Heart right ventricle (tissue), 16 donors: ENCODE measurements at regions of chr17 and their contacts with region 1.

Region 1: GRCh38 chr17:1516388-1517161 is at the start of gene INPP5K:
- DNase-seq: peak; percentile 98
- ATAC-seq: peak; percentile 96 to 99 (median 97)
- H3K4me3 ChIP-seq: peak within 1 kb of the TSS; percentile 81 to 100 (median 94)
- H3K27ac ChIP-seq: peak within 1 kb of the TSS; percentile 86 to 97 (median 92)
- H3K4me1 ChIP-seq: peaks cover 18 to 59% (median 50%) of the 10 kb centered on the region in 9 donors
- H3K27me3 ChIP-seq: no peaks in the 10 kb centered on the region
- CTCF ChIP-seq: peak in 1 of 9 donors; percentile 14
- total RNA-seq, gene INPP5K: 26.8 to 41.2 (median 32.7) TPM

Region 2: DNA sequence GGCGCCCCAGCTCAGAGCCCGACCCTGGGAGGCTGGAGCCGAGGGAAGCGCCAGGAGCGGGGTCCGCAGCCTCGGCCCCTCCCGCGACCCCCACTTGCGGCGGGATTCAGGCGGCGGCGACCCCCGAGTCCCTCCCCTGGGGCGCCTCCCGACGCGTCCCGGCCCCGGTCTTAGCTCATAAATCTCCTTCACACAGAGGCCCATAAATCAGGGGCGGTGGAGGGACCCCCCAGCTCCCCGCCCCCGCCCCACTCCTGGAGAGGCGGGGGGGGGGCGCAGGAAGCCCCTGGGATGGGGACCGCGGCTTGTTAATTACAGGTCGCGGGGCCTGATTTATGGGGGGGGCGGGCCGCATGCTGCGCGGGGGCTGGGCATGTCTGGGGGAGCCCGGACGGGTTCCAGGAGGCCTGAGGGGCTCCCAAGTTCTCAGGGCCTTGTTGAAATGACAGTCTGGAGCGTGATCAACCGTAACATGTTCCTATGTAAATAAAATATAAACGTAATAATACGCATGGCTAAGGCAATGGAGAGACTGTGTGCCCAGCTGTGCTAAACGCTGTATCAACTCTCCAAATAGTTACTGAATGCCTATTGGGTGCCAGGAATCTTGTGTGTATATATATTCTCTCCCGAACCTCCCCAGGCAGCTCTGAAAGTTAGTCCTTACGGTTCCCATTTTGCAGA is 256.3 kb before region 1 on chr17:
- intact Hi-C with region 1: loop called in 4 of 10 experiments (anchors 5 to 10 kb)
- DNase-seq: no peak
- ATAC-seq: peak in 3 of 8 donors; percentile 3 to 15 (median 15)
- H3K4me3 ChIP-seq: peak overlapping the region in 9 of 10 donors; percentile 25 to 58 (median 54)
- H3K27ac ChIP-seq: peak overlapping the region in 1 of 10 donors; percentile 66
- H3K4me1 ChIP-seq: peaks cover 0 to 28% (median 22%) of the 10 kb centered on the region in 9 donors
- H3K27me3 ChIP-seq: peaks cover 0 to 45% (median 0%) of the 10 kb centered on the region in 7 donors
- CTCF ChIP-seq: no peak

Region 3: GRCh38 chr17:1275962-1276736 is 240.4 kb before region 1 on chr17:
- intact Hi-C with region 1: loop called in 3 of 10 experiments (anchors 5 to 10 kb)
- DNase-seq: peak; percentile 63 to 76
- ATAC-seq: peak; percentile 43 to 84 (median 70)
- H3K4me3 ChIP-seq: no peak overlapping the region
- H3K27ac ChIP-seq: no peak overlapping the region
- H3K4me1 ChIP-seq: peaks cover 0 to 7% (median 0%) of the 10 kb centered on the region in 9 donors
- H3K27me3 ChIP-seq: peaks cover 0 to 44% (median 38%) of the 10 kb centered on the region in 7 donors
- CTCF ChIP-seq: peak; percentile 67 to 88 (median 82)

Region 4: DNA sequence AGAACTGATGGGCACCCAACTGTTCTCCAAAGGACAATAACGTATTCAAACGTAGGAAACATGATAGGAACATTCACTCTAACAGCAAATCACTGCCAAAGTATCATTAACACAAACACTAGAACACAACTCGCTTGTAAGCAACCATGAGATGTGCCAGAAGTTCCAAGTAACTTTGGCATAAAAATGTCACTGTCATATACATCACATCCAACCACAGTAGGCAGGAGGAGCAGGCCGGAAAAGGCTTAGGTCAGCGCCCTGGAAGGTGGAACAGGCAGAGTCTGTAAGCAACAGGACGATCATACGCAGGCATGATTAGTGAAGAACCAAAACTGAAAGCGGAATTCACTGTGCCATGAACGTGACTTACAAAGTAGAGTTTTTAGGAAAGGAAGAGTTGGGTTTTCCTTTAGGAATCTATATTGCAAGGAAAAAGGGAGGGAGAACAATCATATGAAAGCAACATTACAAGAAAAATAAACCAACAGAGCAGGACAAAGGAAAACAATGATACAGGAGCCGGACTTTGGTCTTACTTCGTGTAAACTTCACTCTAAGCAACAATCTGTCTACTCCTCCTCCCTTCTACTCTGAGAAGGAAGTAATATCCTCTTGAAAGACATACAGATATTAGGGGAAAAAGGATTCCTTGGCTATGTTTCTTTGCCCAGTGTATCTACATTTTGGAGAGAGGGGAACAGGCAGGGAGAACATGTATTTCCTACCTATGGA is 168.8 kb before region 1 on chr17:
- intact Hi-C with region 1: loop called in 2 of 10 experiments (anchors 5 kb)
- DNase-seq: peak in 1 of 2 donors; percentile 44
- ATAC-seq: peak; percentile 53 to 84 (median 74)
- H3K4me3 ChIP-seq: peak overlapping the region in 6 of 10 donors; percentile 10 to 30 (median 26)
- H3K27ac ChIP-seq: peak overlapping the region in 8 of 10 donors; percentile 36 to 78 (median 58)
- H3K4me1 ChIP-seq: peaks cover 3 to 46% (median 32%) of the 10 kb centered on the region in 9 donors
- H3K27me3 ChIP-seq: no peaks in the 10 kb centered on the region
- CTCF ChIP-seq: no peak

Region 5: DNA sequence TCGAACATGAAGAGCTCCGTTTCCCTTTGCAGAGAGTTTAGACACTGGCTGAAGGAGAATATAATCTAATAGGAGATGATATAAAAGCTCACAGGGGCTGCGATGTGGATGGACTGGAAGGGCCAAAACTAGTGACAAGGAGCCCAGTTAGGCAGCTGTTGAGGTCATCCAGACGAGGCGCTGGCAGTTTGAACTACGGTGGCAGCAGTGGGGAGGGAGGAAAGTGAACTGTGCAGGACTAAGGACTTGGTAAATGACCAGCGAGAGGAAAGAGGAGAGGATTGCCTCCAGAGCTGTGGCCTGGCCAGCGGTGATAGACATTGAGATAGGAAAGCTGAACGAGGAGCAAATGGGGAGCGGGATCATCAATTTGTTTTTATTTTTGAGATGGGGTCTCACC is 101.9 kb before region 1 on chr17:
- intact Hi-C with region 1: loop called in 1 of 10 experiments (anchors 5 kb)
- DNase-seq: no peak
- ATAC-seq: peak in 4 of 8 donors; percentile 9 to 24 (median 18)
- H3K4me3 ChIP-seq: no peak overlapping the region
- H3K27ac ChIP-seq: peak overlapping the region in 6 of 10 donors; percentile 2 to 60 (median 35)
- H3K4me1 ChIP-seq: peaks cover 0 to 28% (median 25%) of the 10 kb centered on the region in 9 donors
- H3K27me3 ChIP-seq: no peaks in the 10 kb centered on the region
- CTCF ChIP-seq: no peak

Region 6: GRCh38 chr17:1482680-1483079 is 33.9 kb before region 1 on chr17:
- intact Hi-C with region 1: loop called in 2 of 10 experiments (anchors 2 kb)
- DNase-seq: peak in 1 of 2 donors; percentile 46
- ATAC-seq: peak in 3 of 8 donors; percentile 3 to 25 (median 14)
- H3K4me3 ChIP-seq: no peak overlapping the region
- H3K27ac ChIP-seq: peak overlapping the region in 5 of 10 donors; percentile 10 to 99 (median 56)
- H3K4me1 ChIP-seq: peaks cover 14 to 58% (median 32%) of the 10 kb centered on the region in 9 donors
- H3K27me3 ChIP-seq: peaks cover 0 to 35% (median 0%) of the 10 kb centered on the region in 7 donors
- CTCF ChIP-seq: no peak

Region 7: GRCh38 chr17:1495265-1495989 is 21.1 kb before region 1 on chr17:
- intact Hi-C with region 1: loop called in 6 of 10 experiments (anchors 2 kb)
- DNase-seq: peak; percentile 71 to 74
- ATAC-seq: peak in 7 of 8 donors; percentile 30 to 71 (median 47)
- H3K4me3 ChIP-seq: peak overlapping the region in 3 of 10 donors; percentile 6 to 14 (median 13)
- H3K27ac ChIP-seq: peak overlapping the region in 9 of 10 donors; percentile 34 to 100 (median 97)
- H3K4me1 ChIP-seq: peaks cover 12 to 78% (median 62%) of the 10 kb centered on the region in 9 donors
- H3K27me3 ChIP-seq: peaks cover 0 to 10% (median 0%) of the 10 kb centered on the region in 7 donors
- CTCF ChIP-seq: no peak